HepG2 (cell line): ENCODE measurements at regions of chr14 and their contacts with region 1.

Region 1: GRCh38 chr14:39266871-39267591 is 33.3 kb downstream of the MIA2 start:
- DNase-seq: peak; percentile 86
- ATAC-seq: peak; percentile 88
- H3K4me3 ChIP-seq: peak overlapping the region; percentile 72 to 91 (median 74)
- H3K27ac ChIP-seq: peak overlapping the region; percentile 93
- H3K4me1 ChIP-seq: peaks cover 56% of the 10 kb centered on the region
- H3K27me3 ChIP-seq: no peaks in the 10 kb centered on the region; a peak in 1 of 5 replicates
- CTCF ChIP-seq: no peak
- EP300 ChIP-seq: no peak
- POLR2A ChIP-seq: peak in 1 of 2 experiments; percentile 88; a peak in 2 of 4 replicates
- RAD21 ChIP-seq: no peak; the same call in none of the 2 replicates

Region 2: DNA sequence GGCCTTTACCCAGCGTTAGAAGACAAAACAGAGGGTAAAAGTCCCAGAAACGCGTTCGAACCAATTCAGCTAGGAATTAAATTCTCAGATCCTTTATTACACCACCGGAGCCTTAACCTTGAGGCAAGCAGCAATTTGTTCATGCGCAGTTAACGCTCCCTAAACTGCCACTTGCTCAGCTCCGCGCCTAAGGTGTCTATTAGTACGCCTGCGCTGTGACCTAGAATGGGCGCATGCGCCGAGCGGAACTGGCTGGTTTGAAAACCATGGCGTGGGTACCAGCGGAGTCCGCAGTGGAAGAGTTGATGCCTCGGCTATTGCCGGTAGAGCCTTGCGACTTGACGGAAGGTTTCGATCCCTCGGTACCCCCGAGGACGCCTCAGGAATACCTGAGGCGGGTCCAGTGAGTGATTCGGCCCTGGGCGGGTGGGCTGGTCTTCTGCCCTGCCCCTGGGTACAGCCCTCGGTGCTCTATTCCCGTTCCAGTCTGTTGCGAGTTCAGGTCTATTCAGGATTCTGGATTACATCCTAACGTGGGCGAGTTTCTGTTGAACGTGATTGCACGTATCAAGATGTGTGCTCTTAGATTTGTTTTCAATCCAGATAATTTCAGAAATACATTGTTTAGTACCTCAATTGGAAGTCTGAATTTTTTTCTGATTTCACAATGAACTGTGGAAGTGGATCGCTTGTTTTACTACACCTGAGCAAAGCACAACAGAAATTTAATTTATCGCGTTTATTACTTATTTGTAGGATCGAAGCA is 152.8 kb before region 1 on chr14 and contains the start of gene GEMIN2:
- CTCF ChIA-PET with region 1: no interaction called
- POLR2A ChIA-PET with region 1: interaction called, 13 read pairs
- in situ Hi-C with region 1: no loop called
- intact Hi-C with region 1: no loop called
- DNase-seq: peak; percentile 97
- ATAC-seq: peak; percentile 99
- H3K4me3 ChIP-seq: peak within 1 kb of the TSS; percentile 71 to 90 (median 76)
- H3K27ac ChIP-seq: peak within 1 kb of the TSS; percentile 40
- H3K4me1 ChIP-seq: peaks cover 33% of the 10 kb centered on the region
- H3K27me3 ChIP-seq: no peaks in the 10 kb centered on the region; a peak in 1 of 5 replicates
- CTCF ChIP-seq: peak; percentile 26
- EP300 ChIP-seq: peak in 1 of 2 experiments; percentile 13; a peak in 2 of 4 replicates
- POLR2A ChIP-seq: peak; percentile 89 to 99; a peak in 3 of 4 replicates
- RAD21 ChIP-seq: peak; percentile 29; the same call in 1 of the 2 replicates
- total RNA-seq, gene GEMIN2: 110 and 160 TPM in 2 replicates

Region 3: GRCh38 chr14:39181026-39181692 is 85.9 kb before region 1 on chr14:
- CTCF ChIA-PET with region 1: no interaction called
- POLR2A ChIA-PET with region 1: interaction called, 12 read pairs
- in situ Hi-C with region 1: no loop called
- intact Hi-C with region 1: no loop called
- DNase-seq: no peak
- ATAC-seq: peak; percentile 14
- H3K4me3 ChIP-seq: no peak overlapping the region
- H3K27ac ChIP-seq: no peak overlapping the region
- H3K4me1 ChIP-seq: peaks cover 52% of the 10 kb centered on the region
- H3K27me3 ChIP-seq: no peaks in the 10 kb centered on the region
- CTCF ChIP-seq: no peak
- EP300 ChIP-seq: no peak
- POLR2A ChIP-seq: peak; percentile 46 to 48; a peak in 3 of 4 replicates
- RAD21 ChIP-seq: 0 out of 2 replicates have a peak, but pooled peaks have one; percentile 31

Region 4: DNA sequence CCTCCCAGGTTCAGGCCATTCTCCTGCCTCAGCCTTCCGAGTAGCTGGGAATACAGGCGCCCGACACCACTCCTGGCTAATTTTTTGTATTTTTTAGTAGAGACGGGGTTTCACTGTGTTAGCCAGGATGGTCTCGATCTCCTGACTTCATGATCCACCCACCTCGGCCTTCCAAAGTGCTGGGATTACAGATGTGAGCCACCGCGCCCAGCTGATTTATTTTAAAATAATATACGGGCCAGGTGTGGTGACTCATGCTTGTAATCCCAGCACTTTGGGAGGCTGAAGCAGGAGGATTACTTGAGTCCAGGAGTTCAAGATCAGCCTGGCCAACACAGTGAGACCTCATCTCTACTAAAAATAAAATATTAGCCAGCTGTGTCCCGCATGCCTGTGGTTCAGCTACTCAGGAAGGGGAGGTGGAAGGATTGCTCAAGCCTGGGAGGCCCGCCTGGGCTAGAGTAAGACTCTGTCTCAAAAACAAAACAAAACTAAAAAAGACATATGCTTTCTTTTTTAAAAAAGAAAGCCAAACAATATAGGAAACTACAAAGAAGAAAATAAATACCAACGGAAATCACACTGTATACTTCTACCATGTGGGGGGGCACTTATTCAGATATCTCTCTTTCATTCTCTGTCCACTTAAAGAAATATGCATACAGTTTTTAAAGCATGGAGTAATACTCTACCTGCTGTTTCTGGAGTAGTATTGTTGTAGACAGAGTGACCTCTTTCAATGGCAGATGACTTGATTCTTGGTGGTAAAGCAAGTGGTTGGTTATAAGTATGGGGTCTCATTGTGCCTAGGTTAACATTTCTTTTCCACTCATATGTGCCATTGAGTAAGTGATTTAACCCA is 34.2 kb before region 1 on chr14:
- CTCF ChIA-PET with region 1: no interaction called
- POLR2A ChIA-PET with region 1: interaction called, 112 read pairs
- in situ Hi-C with region 1: no loop called
- intact Hi-C with region 1: loop called (anchors 1 kb)
- DNase-seq: peak; percentile 90
- ATAC-seq: peak; percentile 84
- H3K4me3 ChIP-seq: peak overlapping the region; percentile 65 to 72 (median 65)
- H3K27ac ChIP-seq: peak overlapping the region; percentile 69
- H3K4me1 ChIP-seq: peaks cover 49% of the 10 kb centered on the region
- H3K27me3 ChIP-seq: no peaks in the 10 kb centered on the region; a peak in 1 of 5 replicates
- CTCF ChIP-seq: peak; percentile 4; the same call in 1 of the 2 replicates
- EP300 ChIP-seq: peak in 1 of 2 experiments; percentile 75; a peak in 3 of 4 replicates
- POLR2A ChIP-seq: no peak
- RAD21 ChIP-seq: peak; percentile 44

Region 5: DNA sequence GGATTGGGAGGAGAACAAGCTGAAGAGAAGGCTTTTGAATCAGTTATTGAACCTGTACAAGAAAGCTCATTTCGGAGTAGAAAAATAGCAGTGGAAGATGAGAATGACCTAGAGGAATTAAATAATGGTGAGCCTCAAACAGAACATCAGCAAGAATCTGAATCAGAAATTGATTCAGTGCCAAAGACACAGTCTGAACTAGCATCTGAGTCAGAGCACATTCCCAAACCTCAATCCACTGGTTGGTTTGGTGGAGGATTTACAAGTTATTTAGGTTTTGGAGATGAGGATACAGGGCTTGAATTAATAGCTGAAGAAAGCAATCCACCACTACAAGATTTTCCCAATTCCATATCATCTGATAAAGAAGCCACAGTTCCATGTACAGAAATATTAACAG is 19.8 kb before region 1 on chr14:
- CTCF ChIA-PET with region 1: no interaction called
- POLR2A ChIA-PET with region 1: interaction called, 25 read pairs
- in situ Hi-C with region 1: no loop called
- intact Hi-C with region 1: no loop called
- DNase-seq: no peak
- ATAC-seq: no peak
- H3K4me3 ChIP-seq: no peak overlapping the region
- H3K27ac ChIP-seq: no peak overlapping the region
- H3K4me1 ChIP-seq: peaks cover 5% of the 10 kb centered on the region; the same call in 1 of the 2 replicates
- H3K27me3 ChIP-seq: no peaks in the 10 kb centered on the region; a peak in 1 of 5 replicates
- CTCF ChIP-seq: no peak
- EP300 ChIP-seq: no peak
- POLR2A ChIP-seq: no peak
- RAD21 ChIP-seq: no peak

Region 6: GRCh38 chr14:39368261-39368959 is 101.4 kb after region 1 on chr14:
- CTCF ChIA-PET with region 1: no interaction called
- POLR2A ChIA-PET with region 1: interaction called, 11 read pairs
- in situ Hi-C with region 1: no loop called
- intact Hi-C with region 1: no loop called
- DNase-seq: peak; percentile 88
- ATAC-seq: peak; percentile 77
- H3K4me3 ChIP-seq: no peak overlapping the region
- H3K27ac ChIP-seq: no peak overlapping the region
- H3K4me1 ChIP-seq: peaks cover 5% of the 10 kb centered on the region; the same call in 1 of the 2 replicates
- H3K27me3 ChIP-seq: no peaks in the 10 kb centered on the region
- CTCF ChIP-seq: peak; percentile 82
- EP300 ChIP-seq: no peak
- POLR2A ChIP-seq: no peak
- RAD21 ChIP-seq: peak; percentile 86